ENCODE measurements at regions of chr10 and their contacts with region 1.

Region 1: DNA sequence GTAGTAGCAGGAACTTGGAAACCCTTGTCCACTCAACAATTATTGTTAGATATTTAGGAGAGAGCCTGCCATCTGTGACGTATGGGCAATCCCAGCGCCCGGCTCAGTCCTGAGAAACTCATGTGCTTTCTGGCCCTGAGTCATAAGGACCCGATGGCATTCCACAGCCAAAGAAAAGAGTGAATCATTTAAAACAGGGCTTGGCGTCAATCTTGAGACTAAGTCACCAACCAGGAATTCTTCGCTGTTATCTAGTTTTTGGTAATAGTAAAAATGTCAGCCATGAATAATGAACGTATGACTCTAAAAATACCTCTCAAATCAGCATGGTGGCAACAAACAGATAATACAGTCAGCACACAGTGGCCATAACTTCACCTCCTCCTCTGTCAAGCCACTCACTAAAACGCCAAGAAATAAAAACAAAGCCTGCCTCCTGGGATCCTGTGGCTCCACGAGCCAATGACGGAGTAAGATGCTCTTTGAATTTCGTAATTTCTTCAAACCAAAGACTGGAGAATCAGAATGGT is 140.8 kb downstream of the ADAM12 start:
- DNase-seq: peak; percentile 100
- ATAC-seq: peak; percentile 79
- H3K4me3 ChIP-seq: no peak overlapping the region
- H3K27ac ChIP-seq: peak overlapping the region; percentile 39; the same call in 1 of the 2 replicates
- H3K4me1 ChIP-seq: peaks cover 18% of the 10 kb centered on the region
- H3K27me3 ChIP-seq: no peaks in the 10 kb centered on the region
- CTCF ChIP-seq: no peak
- POLR2A ChIP-seq: 0 out of 2 replicates have a peak, but pooled peaks have one; percentile 21
- RAD21 ChIP-seq: peak; percentile 34; the same call in 1 of the 2 replicates

Region 2: DNA sequence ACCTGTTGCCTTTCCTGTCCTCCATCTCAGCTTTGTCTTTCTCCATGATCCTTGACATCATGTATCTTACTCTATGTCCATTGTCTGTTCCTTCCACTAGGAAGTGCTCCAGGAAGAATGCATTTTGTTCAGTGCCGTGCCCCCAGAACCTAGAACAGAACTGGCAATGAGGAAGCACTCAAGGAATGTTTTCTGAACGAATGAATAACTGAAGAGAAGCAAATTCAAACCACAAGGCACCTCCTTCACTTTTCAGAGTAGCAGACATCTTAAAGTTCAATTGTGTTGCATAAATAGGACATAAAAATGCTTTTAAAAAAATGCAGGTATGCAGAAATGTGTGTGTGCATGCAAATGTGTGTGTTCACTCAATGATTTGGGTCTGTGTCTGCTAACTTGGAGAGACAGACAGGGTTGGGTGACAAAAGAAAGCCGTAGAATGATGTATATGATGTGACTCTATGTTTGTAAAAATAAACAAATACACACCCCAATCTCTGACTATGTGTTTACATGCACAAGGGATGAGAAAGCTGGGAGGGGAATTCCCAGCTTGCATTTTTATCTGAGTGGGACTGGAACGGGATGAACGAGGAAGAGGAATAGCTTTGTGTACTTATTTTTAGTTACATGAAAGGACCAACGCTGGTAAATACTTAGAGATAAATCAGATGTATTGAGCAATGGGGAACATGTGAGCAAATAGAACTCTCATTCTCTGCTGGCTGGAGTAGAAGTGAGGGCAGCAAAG is 113.4 kb before region 1 on chr10:
- CTCF ChIA-PET with region 1: no interaction called
- POLR2A ChIA-PET with region 1: no interaction called
- dilution Hi-C with region 1: no loop called
- in situ Hi-C with region 1: no loop called
- intact Hi-C with region 1: loop called (anchors 10 kb)
- DNase-seq: peak; percentile 93
- ATAC-seq: peak; percentile 81
- H3K4me3 ChIP-seq: no peak overlapping the region
- H3K27ac ChIP-seq: no peak overlapping the region
- H3K4me1 ChIP-seq: peaks cover 9% of the 10 kb centered on the region
- H3K27me3 ChIP-seq: no peaks in the 10 kb centered on the region
- CTCF ChIP-seq: no peak
- POLR2A ChIP-seq: no peak
- RAD21 ChIP-seq: no peak

Region 3: GRCh38 chr10:126199221-126199998 is 48.1 kb before region 1 on chr10:
- CTCF ChIA-PET with region 1: no interaction called
- POLR2A ChIA-PET with region 1: no interaction called
- dilution Hi-C with region 1: no loop called
- in situ Hi-C with region 1: no loop called
- intact Hi-C with region 1: loop called (anchors 1 kb)
- DNase-seq: peak; percentile 100
- ATAC-seq: peak; percentile 93
- H3K4me3 ChIP-seq: no peak overlapping the region
- H3K27ac ChIP-seq: no peak overlapping the region
- H3K4me1 ChIP-seq: peaks cover 4% of the 10 kb centered on the region; the same call in 1 of the 2 replicates
- H3K27me3 ChIP-seq: no peaks in the 10 kb centered on the region
- CTCF ChIP-seq: no peak
- POLR2A ChIP-seq: no peak; the same call in 1 of the 2 replicates
- RAD21 ChIP-seq: peak; percentile 17; the same call in 1 of the 2 replicates

Region 4: GRCh38 chr10:126350216-126350992 is 102.9 kb after region 1 on chr10:
- CTCF ChIA-PET with region 1: no interaction called
- POLR2A ChIA-PET with region 1: no interaction called
- dilution Hi-C with region 1: no loop called
- in situ Hi-C with region 1: no loop called
- intact Hi-C with region 1: no loop called
- DNase-seq: peak; percentile 90
- ATAC-seq: peak; percentile 81
- H3K4me3 ChIP-seq: no peak overlapping the region
- H3K27ac ChIP-seq: no peak overlapping the region; the same call in 1 of the 2 replicates
- H3K4me1 ChIP-seq: peaks cover 9% of the 10 kb centered on the region
- H3K27me3 ChIP-seq: no peaks in the 10 kb centered on the region
- CTCF ChIP-seq: no peak
- POLR2A ChIP-seq: 0 out of 2 replicates have a peak, but pooled peaks have one; percentile 28
- RAD21 ChIP-seq: no peak

Measured in IMR-90 (cell line).